PC-3 (cell line): ENCODE measurements at regions of chr21 and their contacts with region 1.

Region 1: DNA sequence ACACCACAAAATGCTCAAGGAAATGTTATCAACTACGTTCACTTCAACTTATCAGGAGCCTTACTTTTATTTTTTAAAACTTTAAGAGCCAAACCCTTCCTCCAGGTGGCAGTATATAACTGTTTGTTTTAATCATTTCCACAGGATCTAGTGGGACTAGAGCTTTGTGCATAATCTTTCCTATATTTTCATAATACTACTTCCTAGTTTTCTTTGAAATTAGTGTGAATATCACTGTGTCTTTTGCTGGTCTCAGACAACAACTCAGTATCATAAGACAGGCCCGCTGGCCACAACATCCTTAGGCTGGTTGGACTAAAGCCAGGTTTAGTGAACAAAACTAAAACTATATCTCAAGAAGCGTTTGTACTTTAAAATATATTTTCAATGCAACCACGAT is 145.5 kb downstream of the TIAM1 start:
- DNase-seq: peak; percentile 85
- ATAC-seq: peak; percentile 40
- H3K4me3 ChIP-seq: no peak overlapping the region
- H3K27ac ChIP-seq: no peak overlapping the region
- H3K4me1 ChIP-seq: peaks cover 28% of the 10 kb centered on the region
- H3K27me3 ChIP-seq: no peaks in the 10 kb centered on the region
- CTCF ChIP-seq: peak; percentile 87

Region 2: DNA sequence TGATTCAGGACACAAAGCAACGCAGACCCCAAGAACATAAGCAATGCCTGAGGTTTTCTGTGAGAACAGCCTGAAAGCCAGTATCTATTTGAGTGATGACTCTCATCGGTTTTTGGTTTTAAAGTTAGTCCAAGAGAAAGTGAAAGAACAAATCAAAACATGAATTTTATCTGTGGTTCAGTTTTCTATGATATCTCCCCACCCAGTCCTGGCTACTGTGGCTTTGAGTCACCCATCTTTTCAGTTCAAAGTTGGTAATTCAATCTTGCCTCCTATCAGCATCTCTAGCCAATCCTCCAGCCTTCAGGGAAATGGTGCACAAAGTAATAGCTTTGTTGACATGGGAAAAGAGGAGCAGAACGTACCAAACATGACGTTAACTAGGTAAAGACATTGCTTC is 119.8 kb before region 1 on chr21:
- CTCF ChIA-PET with region 1: no interaction called
- POLR2A ChIA-PET with region 1: no interaction called
- intact Hi-C with region 1: no loop called
- DNase-seq: no peak
- ATAC-seq: no peak
- H3K4me3 ChIP-seq: no peak overlapping the region
- H3K27ac ChIP-seq: no peak overlapping the region
- H3K4me1 ChIP-seq: no peaks in the 10 kb centered on the region
- H3K27me3 ChIP-seq: peaks cover 47% of the 10 kb centered on the region
- CTCF ChIP-seq: no peak

Region 3: DNA sequence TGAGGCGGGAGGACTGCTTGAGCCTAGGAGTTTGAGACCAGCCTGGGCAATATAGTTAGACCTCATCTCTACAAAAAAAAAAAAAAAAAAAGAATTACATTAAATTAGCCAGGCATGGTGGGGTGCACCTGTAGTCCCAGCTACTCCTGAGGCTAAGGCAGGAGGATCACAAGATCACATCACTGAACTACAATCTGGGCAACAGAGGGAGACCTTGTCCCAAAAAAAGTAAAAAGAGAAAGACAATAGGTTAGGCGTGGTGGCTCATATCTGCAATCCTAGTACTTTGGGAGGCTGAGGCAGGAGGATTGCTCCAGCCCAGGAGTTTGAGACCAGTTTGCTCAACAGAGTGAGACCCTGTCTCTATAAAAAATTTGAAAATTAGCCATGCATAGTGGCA is 15.2 kb after region 1 on chr21:
- CTCF ChIA-PET with region 1: interaction called, 13 read pairs
- POLR2A ChIA-PET with region 1: no interaction called
- intact Hi-C with region 1: no loop called
- DNase-seq: peak; percentile 46
- ATAC-seq: peak; percentile 56
- H3K4me3 ChIP-seq: no peak overlapping the region
- H3K27ac ChIP-seq: no peak overlapping the region
- H3K4me1 ChIP-seq: peaks cover 6% of the 10 kb centered on the region
- H3K27me3 ChIP-seq: no peaks in the 10 kb centered on the region
- CTCF ChIP-seq: no peak; the same call in 1 of the 2 replicates

Region 4: DNA sequence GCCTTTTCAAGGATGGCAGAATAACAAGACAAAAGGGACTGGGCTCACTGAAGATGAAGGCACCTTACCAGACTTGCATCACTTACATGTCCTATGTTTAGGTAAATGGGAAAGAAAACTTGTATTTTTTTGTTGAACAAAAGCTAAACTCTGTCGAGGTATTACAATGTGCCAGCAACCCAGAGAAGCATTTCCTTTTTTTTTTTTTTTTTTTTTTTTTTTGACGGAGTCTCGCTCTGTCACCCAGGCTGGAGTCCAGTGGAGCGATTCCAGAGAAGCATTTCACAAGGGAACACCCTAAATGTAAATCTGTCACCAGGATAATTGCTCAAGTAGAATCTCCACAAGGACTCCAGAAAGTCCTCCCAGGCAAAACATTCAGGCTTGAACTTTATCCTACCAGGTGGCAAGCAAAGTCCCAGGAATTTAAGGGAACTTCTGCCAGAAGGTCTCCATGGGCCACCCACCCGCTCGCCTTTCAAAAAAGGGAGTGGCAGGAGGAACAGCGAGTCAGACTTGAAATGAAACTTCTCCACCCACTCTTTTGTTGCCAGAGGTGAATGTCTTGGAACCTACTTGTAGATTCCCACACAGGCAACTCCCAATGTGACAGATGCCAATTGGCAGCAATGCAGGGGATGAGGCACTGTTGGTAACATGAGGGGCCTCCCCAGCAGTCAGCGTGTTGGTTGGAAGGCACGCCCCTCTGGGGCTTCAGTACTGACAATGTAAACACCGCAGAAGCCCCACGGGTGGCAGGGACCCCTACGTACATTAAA is 20.4 kb after region 1 on chr21:
- CTCF ChIA-PET with region 1: no interaction called
- POLR2A ChIA-PET with region 1: no interaction called
- intact Hi-C with region 1: loop called (anchors 1 kb)
- DNase-seq: peak; percentile 97
- ATAC-seq: peak; percentile 87
- H3K4me3 ChIP-seq: peak overlapping the region; percentile 57
- H3K27ac ChIP-seq: peak overlapping the region; percentile 90
- H3K4me1 ChIP-seq: peaks cover 40% of the 10 kb centered on the region
- H3K27me3 ChIP-seq: no peaks in the 10 kb centered on the region
- CTCF ChIP-seq: no peak

Region 5: GRCh38 chr21:31248601-31249000 is 50.0 kb after region 1 on chr21:
- CTCF ChIA-PET with region 1: no interaction called
- POLR2A ChIA-PET with region 1: no interaction called
- intact Hi-C with region 1: no loop called
- DNase-seq: peak; percentile 84
- ATAC-seq: peak; percentile 96
- H3K4me3 ChIP-seq: no peak overlapping the region
- H3K27ac ChIP-seq: 0 out of 2 replicates have a peak overlapping the region, but pooled peaks have one; percentile 14
- H3K4me1 ChIP-seq: peaks cover 12% of the 10 kb centered on the region
- H3K27me3 ChIP-seq: no peaks in the 10 kb centered on the region
- CTCF ChIP-seq: no peak

Region 6: GRCh38 chr21:31335957-31336738 is 137.6 kb after region 1 on chr21:
- CTCF ChIA-PET with region 1: interaction called, 7 read pairs
- POLR2A ChIA-PET with region 1: interaction called, 26 read pairs
- intact Hi-C with region 1: no loop called
- DNase-seq: peak; percentile 96
- ATAC-seq: peak; percentile 96
- H3K4me3 ChIP-seq: peak overlapping the region; percentile 26; the same call in 1 of the 2 replicates
- H3K27ac ChIP-seq: peak overlapping the region; percentile 78
- H3K4me1 ChIP-seq: peaks cover 16% of the 10 kb centered on the region
- H3K27me3 ChIP-seq: no peaks in the 10 kb centered on the region
- CTCF ChIP-seq: no peak

Region 7: DNA sequence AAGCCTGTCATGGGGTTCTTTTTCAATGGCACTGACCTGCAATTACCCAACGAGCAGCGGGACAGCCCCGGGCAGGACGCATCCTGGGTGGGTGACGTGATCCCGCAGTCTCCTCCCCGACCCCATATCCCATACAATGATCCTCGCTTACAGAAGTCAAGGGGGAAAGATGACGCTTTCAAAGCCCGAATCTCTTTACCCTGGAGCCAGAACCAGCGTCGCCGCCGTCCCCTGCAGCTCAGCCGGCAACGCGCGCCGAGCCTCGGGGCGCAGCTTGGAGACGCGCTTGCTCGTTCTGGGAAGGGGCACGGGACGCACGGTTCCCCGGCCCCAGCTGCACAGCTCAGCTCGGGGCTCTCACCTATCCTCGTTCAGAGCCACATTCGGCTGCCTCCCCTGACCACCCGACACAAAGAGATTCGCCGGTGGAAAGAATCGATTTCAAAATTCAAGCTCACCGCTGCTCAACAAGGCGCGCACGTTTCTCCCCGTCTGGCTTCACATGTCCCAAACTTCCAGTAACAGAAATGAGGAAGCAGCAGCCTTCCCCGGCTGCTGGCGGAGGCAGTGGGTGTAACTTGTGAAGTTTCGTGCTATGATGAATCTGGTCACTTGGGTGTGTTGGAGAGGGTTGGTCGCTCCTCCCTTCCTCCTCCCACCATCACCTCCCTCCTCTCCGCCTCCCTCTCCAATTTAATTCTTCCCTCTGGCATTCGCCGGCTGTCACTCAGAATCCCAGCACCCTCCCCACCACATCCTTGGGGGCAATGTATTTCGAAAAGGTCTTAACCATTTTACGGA is 145.3 kb after region 1 on chr21 and contains the start of gene TIAM1:
- CTCF ChIA-PET with region 1: interaction called, 3 read pairs
- POLR2A ChIA-PET with region 1: interaction called, 26 read pairs
- intact Hi-C with region 1: loop called (anchors 1 kb)
- DNase-seq: peak; percentile 89
- ATAC-seq: peak; percentile 91
- H3K4me3 ChIP-seq: peak within 1 kb of the TSS; percentile 85
- H3K27ac ChIP-seq: peak within 1 kb of the TSS; percentile 62
- H3K4me1 ChIP-seq: peaks cover 38% of the 10 kb centered on the region
- H3K27me3 ChIP-seq: no peaks in the 10 kb centered on the region
- CTCF ChIP-seq: no peak
- total RNA-seq, gene TIAM1: 19.1 and 21.1 TPM in 2 replicates

Region 8: GRCh38 chr21:31482460-31482859 is 283.9 kb after region 1 on chr21:
- CTCF ChIA-PET with region 1: no interaction called
- POLR2A ChIA-PET with region 1: no interaction called
- intact Hi-C with region 1: no loop called
- DNase-seq: no peak
- ATAC-seq: no peak
- H3K4me3 ChIP-seq: no peak overlapping the region
- H3K27ac ChIP-seq: no peak overlapping the region
- H3K4me1 ChIP-seq: no peaks in the 10 kb centered on the region
- H3K27me3 ChIP-seq: peaks cover 4% of the 10 kb centered on the region; the same call in 1 of the 2 replicates
- CTCF ChIP-seq: no peak

Region 9: GRCh38 chr21:31580866-31581276 is 382.3 kb after region 1 on chr21:
- CTCF ChIA-PET with region 1: interaction called, 8 read pairs
- POLR2A ChIA-PET with region 1: no interaction called
- intact Hi-C with region 1: loop called (anchors 1 kb)
- DNase-seq: peak; percentile 88
- ATAC-seq: peak; percentile 92
- H3K4me3 ChIP-seq: no peak overlapping the region
- H3K27ac ChIP-seq: no peak overlapping the region
- H3K4me1 ChIP-seq: no peaks in the 10 kb centered on the region
- H3K27me3 ChIP-seq: no peaks in the 10 kb centered on the region
- CTCF ChIP-seq: peak; percentile 89

Region 10: DNA sequence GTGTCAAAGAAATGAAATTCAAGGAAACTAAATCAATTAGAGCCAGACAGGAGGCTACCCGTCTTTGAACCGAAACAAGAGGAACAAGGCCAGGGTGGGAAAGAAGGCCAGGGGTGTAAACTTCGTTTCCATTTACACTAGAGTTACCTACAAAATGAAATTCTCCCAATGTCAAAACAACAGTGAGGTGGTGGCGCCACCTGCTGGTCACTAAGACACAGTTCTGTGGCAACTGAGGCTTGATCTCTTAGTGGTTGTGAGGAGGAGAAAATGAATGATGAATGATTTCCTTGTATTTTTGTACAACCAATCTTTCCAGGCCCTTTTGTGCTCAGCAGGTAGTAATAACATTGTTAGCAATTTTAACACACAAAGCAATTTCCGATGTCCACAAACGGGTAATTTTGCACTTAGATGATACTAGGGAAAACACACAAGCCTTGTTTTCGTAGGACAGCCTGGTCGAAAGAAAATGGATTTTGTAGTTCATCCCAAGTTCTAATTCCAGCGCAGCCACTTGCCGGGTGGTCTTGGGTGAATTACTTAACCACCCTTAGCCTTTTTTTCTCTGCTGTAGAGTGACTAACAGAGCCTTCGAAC is 406.1 kb after region 1 on chr21:
- CTCF ChIA-PET with region 1: no interaction called
- POLR2A ChIA-PET with region 1: no interaction called
- intact Hi-C with region 1: loop called (anchors 1 kb)
- DNase-seq: peak; percentile 87
- ATAC-seq: peak; percentile 91
- H3K4me3 ChIP-seq: no peak overlapping the region
- H3K27ac ChIP-seq: no peak overlapping the region
- H3K4me1 ChIP-seq: peaks cover 11% of the 10 kb centered on the region
- H3K27me3 ChIP-seq: no peaks in the 10 kb centered on the region
- CTCF ChIP-seq: peak; percentile 94